Activated CD4-positive, alpha-beta T cell treated with anti-CD3 and anti-CD28 coated beads for 36 hours (primary cell): ENCODE measurements at regions of chr15 and their contacts with region 1.

Region 1: DNA sequence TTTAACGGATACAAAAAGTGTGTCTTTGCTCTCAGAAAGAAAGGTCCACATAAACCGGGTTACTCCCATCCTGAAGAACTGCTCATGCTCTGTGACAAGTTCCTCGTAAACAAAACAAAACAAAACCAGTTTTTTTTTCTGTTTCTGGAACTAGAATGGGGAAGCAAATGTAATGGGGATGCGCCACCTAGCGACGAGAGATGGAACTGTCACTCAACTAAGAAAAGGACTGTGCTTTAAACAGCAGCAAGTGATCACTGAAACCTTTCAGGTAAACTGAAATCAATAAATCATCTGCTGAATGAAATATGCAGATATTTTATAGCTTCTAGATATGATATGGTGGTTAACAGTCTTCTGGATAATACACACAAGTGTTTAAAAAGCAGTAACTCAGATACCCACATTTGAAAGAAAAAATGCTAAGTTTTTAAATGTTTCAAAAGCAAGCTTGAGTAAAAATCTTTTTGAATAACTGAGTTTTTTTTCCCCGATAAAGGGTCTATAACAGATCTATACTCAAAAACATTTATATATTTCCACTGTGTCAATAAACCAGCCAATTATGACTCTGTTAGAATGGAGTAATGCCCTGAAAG is 10.9 kb downstream of the TM2D3 start:
- DNase-seq: peak; percentile 85
- ATAC-seq: peak; percentile 60
- H3K4me3 Mint-ChIP-seq: no peak overlapping the region
- H3K27ac Mint-ChIP-seq: peak overlapping the region; percentile 78
- H3K4me1 Mint-ChIP-seq: peaks cover 33% of the 10 kb centered on the region
- H3K27me3 Mint-ChIP-seq: no peaks in the 10 kb centered on the region

Region 2: DNA sequence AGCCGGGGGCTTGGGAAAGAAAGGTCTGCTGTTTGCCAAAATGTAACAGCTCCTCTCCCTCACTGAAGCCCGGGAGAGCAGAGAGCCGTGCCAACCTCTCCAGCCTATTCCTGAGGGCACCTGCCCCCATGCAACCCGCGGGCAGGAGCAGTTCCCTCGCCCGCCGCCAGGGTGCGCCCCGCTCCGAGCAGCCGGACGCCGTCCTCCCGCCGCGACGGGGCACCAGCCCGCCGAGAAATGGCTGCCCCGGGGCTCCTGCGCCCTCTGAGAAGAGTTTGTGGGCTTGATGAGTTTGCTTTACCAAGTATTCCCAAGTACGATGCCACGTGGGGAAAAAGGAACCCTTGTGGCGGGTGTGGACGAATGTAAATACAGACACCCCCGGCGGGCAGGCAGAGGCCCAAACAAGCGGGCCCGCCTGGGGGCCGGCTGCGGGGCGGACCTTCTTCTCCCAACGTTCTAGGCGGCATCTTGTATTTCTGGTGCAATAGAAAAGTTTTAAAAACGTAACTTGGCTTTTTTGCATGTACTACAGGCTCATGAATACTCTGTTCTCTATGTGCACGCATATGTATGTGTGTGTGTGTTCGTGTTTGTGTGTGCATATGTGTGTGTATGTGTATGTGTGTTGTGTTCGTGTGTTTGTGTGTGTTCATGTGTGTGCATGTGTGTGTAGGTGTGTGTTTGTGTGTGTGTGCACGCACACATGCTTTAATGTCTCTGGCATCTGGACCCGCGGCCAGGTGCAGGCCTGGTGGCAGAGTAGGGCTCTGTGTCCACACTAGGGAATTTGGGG is 552.3 kb before region 1 on chr15:
- CTCF ChIA-PET with region 1: no interaction called
- POLR2A ChIA-PET with region 1: no interaction called
- intact Hi-C with region 1: loop called in 1 of 2 experiments (anchors 10 kb)
- DNase-seq: peak; percentile 89
- ATAC-seq: peak; percentile 96
- H3K4me3 Mint-ChIP-seq: no peak overlapping the region
- H3K27ac Mint-ChIP-seq: no peak overlapping the region
- H3K4me1 Mint-ChIP-seq: no peaks in the 10 kb centered on the region
- H3K27me3 Mint-ChIP-seq: no peaks in the 10 kb centered on the region

Region 3: DNA sequence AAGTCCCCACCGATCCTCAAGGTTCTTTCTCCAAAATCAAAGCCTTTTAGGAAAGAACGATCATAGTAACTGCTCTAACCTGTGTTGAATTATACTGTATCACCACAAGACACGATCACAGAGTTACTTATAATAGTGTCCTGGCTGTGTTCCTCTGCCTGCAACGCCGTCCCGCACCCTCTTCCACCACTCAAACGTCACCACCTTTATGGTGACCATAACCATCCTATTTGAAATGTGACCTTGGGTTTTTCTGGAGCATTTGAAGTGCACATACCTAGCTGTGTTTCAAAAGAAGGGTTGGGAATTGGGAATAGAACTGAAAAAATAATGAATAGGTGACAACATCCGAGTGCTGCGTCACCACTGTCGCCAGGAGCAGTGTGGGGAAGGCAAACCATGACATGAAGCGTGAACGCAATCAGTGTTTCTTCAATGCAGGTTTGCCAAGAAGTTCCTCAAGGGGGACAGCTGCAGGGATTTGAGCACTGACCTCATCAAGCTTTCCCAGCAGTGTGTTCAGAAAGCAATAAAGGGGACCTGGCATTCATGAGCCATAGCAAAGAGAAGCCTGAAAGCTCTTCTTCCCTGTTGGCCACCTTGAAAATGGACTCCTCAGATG is 363.2 kb before region 1 on chr15:
- CTCF ChIA-PET with region 1: no interaction called
- POLR2A ChIA-PET with region 1: no interaction called
- intact Hi-C with region 1: no loop called
- DNase-seq: no peak
- ATAC-seq: no peak
- H3K4me3 Mint-ChIP-seq: peak overlapping the region; percentile 89
- H3K27ac Mint-ChIP-seq: no peak overlapping the region
- H3K4me1 Mint-ChIP-seq: peaks cover 24% of the 10 kb centered on the region
- H3K27me3 Mint-ChIP-seq: no peaks in the 10 kb centered on the region

Region 4: DNA sequence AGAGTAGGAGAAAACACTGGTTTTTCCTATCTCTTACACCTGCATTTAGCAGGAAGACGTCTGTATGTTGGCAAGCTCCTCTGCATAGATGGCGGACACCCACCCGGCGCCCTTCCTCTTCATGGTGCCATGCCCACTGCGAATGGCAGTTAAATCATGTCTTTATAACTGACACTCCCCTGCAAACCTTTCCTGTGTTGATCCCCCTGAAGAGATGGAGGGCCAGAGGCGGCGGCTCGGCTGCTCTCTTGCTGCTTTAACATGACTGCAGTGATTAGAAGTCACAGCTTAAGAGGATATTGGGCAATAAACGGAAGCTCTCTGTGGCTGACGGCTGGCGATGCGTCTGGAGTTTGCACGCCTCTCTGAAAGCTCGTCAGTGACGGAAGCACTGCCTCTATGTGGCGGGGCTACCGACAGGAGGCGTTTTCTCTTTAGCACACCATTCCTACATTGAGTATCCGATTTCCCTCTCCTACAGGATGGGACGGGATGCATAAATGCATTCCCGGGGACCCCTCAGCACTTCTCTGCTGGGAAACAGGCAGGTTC is 320.7 kb before region 1 on chr15:
- CTCF ChIA-PET with region 1: interaction called, 10 read pairs
- POLR2A ChIA-PET with region 1: no interaction called
- intact Hi-C with region 1: no loop called
- DNase-seq: peak; percentile 82
- ATAC-seq: peak; percentile 98
- H3K4me3 Mint-ChIP-seq: peak overlapping the region; percentile 61
- H3K27ac Mint-ChIP-seq: peak overlapping the region; percentile 64
- H3K4me1 Mint-ChIP-seq: peaks cover 9% of the 10 kb centered on the region
- H3K27me3 Mint-ChIP-seq: no peaks in the 10 kb centered on the region

Region 5: GRCh38 chr15:101545548-101546505 is 95.4 kb before region 1 on chr15:
- CTCF ChIA-PET with region 1: no interaction called
- POLR2A ChIA-PET with region 1: no interaction called
- intact Hi-C with region 1: no loop called
- DNase-seq: no peak
- ATAC-seq: no peak
- H3K4me3 Mint-ChIP-seq: no peak overlapping the region
- H3K27ac Mint-ChIP-seq: no peak overlapping the region
- H3K4me1 Mint-ChIP-seq: no peaks in the 10 kb centered on the region
- H3K27me3 Mint-ChIP-seq: peaks cover 16% of the 10 kb centered on the region

Region 6: GRCh38 chr15:101620671-101621070 is 20.6 kb before region 1 on chr15:
- CTCF ChIA-PET with region 1: interaction called, 12 read pairs
- POLR2A ChIA-PET with region 1: no interaction called
- intact Hi-C with region 1: no loop called
- DNase-seq: no peak
- ATAC-seq: no peak
- H3K4me3 Mint-ChIP-seq: no peak overlapping the region
- H3K27ac Mint-ChIP-seq: no peak overlapping the region
- H3K4me1 Mint-ChIP-seq: peaks cover 37% of the 10 kb centered on the region
- H3K27me3 Mint-ChIP-seq: no peaks in the 10 kb centered on the region

Region 7: GRCh38 chr15:101657968-101658784 is 16.9 kb after region 1 on chr15:
- CTCF ChIA-PET with region 1: interaction called, 15 read pairs
- POLR2A ChIA-PET with region 1: no interaction called
- intact Hi-C with region 1: no loop called
- DNase-seq: no peak
- ATAC-seq: no peak
- H3K4me3 Mint-ChIP-seq: no peak overlapping the region
- H3K27ac Mint-ChIP-seq: no peak overlapping the region
- H3K4me1 Mint-ChIP-seq: peaks cover 13% of the 10 kb centered on the region
- H3K27me3 Mint-ChIP-seq: no peaks in the 10 kb centered on the region